ENCODE measurements at regions of chr16 and their contacts with region 1.

Region 1: DNA sequence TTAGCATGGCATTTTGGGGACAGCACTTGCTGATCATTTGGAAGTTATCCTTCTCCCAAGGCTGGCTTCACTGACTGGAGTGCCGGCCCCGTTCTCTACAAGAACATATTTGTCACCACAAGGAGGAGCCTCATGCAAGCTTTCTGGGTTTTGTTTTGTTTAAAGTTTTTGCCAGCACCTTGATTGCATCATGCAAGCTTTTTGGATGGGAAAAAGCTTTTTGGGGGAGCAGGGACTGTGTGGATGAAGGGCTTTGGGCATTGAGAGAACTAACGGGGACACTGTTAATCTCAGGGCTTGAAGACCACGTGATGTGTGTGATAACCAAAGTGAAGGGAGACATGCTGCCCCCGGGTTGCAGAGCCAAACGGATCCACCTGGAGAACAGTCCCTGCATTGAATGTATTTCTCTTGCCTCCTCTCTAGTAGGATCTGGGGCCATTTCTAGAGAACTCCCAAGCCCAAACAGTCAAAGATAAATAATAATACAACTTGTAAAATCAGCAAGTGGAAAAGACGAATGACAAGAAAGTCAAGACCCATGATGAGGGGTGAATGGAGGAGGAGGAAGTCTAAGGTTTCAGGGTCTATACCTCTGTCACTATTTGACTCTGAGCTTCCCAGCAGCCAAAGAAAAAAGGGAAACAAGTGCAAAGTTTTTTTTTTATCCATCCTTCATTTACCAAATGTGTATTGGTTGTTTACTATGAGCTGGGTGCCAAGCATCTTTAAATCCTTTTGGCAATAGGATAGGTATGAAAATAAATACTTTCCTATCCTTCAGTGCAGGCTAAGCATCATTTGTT is 17.2 kb downstream of the TMEM114 start:
- DNase-seq: peak; percentile 91
- H3K4me3 ChIP-seq: no peak overlapping the region
- H3K27ac ChIP-seq: peak overlapping the region; percentile 100
- H3K4me1 ChIP-seq: peaks cover 74% of the 10 kb centered on the region
- H3K27me3 ChIP-seq: no peaks in the 10 kb centered on the region
- CTCF ChIP-seq: peak; percentile 80

Region 2: GRCh38 chr16:8278181-8278580 is 294.9 kb before region 1 on chr16:
- CTCF ChIA-PET with region 1: no interaction called
- POLR2A ChIA-PET with region 1: no interaction called
- intact Hi-C with region 1: no loop called
- DNase-seq: no peak
- H3K4me3 ChIP-seq: no peak overlapping the region
- H3K27ac ChIP-seq: no peak overlapping the region
- H3K4me1 ChIP-seq: no peaks in the 10 kb centered on the region
- H3K27me3 ChIP-seq: no peaks in the 10 kb centered on the region
- CTCF ChIP-seq: no peak

Region 3: GRCh38 chr16:8634991-8635736 is 62.0 kb after region 1 on chr16:
- CTCF ChIA-PET with region 1: interaction called, 4 read pairs
- POLR2A ChIA-PET with region 1: no interaction called
- intact Hi-C with region 1: loop called (anchors 5 kb)
- DNase-seq: peak; percentile 75
- H3K4me3 ChIP-seq: no peak overlapping the region
- H3K27ac ChIP-seq: peak overlapping the region; percentile 47
- H3K4me1 ChIP-seq: peaks cover 10% of the 10 kb centered on the region
- H3K27me3 ChIP-seq: no peaks in the 10 kb centered on the region
- CTCF ChIP-seq: peak; percentile 94

Region 4: GRCh38 chr16:8712589-8713361 is 139.7 kb after region 1 on chr16:
- CTCF ChIA-PET with region 1: no interaction called
- POLR2A ChIA-PET with region 1: no interaction called
- intact Hi-C with region 1: no loop called
- DNase-seq: peak; percentile 58
- H3K4me3 ChIP-seq: peak overlapping the region; percentile 17
- H3K27ac ChIP-seq: no peak overlapping the region
- H3K4me1 ChIP-seq: peaks cover 10% of the 10 kb centered on the region
- H3K27me3 ChIP-seq: no peaks in the 10 kb centered on the region
- CTCF ChIP-seq: no peak

Region 5: DNA sequence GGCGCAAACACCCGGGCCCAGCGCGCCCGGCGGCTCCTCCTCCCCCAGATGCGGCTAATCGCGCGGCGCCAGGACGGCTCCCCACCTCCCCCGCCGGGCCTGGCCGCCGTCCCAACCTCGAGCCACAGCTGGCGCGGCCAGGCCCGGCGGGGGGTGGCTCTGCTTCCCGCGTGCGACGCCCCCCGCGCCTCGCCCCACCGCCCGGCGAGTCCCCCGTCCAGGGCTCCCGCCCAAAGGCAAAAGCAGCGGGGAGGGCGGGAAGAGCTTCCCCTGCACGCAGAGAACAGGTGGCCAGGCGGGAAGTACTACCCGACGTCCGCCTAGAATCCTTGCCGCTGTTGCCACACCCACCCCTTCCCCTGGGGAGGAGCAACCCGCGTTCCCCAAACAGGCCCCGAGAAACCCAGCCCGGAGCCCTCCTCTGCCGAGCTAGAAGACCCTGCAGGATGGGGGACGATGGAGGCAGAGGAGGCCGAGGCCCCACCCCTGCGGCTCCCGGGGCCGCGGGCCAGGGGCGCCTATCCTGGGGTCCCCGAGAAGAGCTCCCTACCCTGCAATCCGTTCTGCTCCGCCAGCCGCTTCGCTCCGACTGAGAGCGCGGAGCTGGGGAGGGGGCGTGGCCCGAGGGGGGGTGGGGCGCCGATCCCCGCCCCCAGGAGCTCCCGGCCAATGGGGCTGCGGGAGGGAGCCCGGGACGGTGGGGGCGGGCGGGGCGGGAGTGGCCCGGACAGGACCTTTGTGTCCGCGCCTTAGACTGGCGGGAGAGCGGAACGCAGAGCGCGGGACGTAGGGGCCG is 295.5 kb after region 1 on chr16 and contains the start of gene CARHSP1:
- CTCF ChIA-PET with region 1: interaction called, 4 read pairs
- POLR2A ChIA-PET with region 1: no interaction called
- intact Hi-C with region 1: loop called (anchors 2 kb)
- DNase-seq: peak; percentile 97
- H3K4me3 ChIP-seq: peak within 1 kb of the TSS; percentile 90
- H3K27ac ChIP-seq: peak within 1 kb of the TSS; percentile 96
- H3K4me1 ChIP-seq: peaks cover 49% of the 10 kb centered on the region
- H3K27me3 ChIP-seq: no peaks in the 10 kb centered on the region
- CTCF ChIP-seq: no peak
- total RNA-seq, gene CARHSP1: 316 and 329 TPM in 2 replicates

Region 6: DNA sequence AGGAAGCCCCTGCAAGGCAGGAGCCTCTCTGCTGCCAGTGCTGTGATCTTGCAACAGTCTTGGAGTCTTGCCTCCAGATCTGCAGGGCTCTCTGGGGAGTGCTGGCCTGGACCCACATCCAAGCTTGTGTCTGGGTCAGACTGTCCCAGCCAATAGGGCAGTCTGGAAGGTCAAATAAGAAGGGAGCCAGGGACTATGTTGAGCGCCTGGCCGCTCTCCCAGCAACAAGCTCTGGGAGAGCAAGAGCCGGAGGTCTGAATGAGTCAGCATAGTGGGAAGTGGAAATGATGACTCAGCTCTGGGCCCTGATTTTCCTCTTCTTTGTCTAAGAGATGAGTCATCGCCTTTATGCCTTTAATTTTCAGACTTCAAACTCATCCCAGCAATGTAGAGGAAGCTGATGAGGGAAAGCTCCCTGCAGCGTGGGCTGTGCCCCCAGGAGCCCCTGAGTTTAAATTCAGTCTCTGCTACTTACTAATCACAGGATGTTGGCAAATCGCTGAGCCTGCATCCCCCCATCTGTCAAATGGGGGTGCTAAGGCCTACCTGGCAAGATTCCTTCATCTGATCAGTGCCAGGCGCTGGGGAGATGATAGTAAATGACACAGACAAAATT is 474.7 kb after region 1 on chr16:
- CTCF ChIA-PET with region 1: no interaction called
- POLR2A ChIA-PET with region 1: interaction called, 4 read pairs
- intact Hi-C with region 1: loop called (anchors 5 kb)
- DNase-seq: peak; percentile 97
- H3K4me3 ChIP-seq: no peak overlapping the region
- H3K27ac ChIP-seq: peak overlapping the region; percentile 85
- H3K4me1 ChIP-seq: peaks cover 12% of the 10 kb centered on the region
- H3K27me3 ChIP-seq: no peaks in the 10 kb centered on the region
- CTCF ChIP-seq: no peak

Region 7: GRCh38 chr16:9134739-9135138 is 561.6 kb after region 1 on chr16:
- CTCF ChIA-PET with region 1: no interaction called
- POLR2A ChIA-PET with region 1: no interaction called
- intact Hi-C with region 1: loop called (anchors 10 kb)
- DNase-seq: peak; percentile 68
- H3K4me3 ChIP-seq: no peak overlapping the region
- H3K27ac ChIP-seq: no peak overlapping the region
- H3K4me1 ChIP-seq: no peaks in the 10 kb centered on the region
- H3K27me3 ChIP-seq: no peaks in the 10 kb centered on the region
- CTCF ChIP-seq: peak; percentile 74

Measured in A673 (cell line).